ENCODE measurements at regions of chr12 and their contacts with region 1.

Region 1: GRCh38 chr12:132414634-132415326 is 75.2 kb upstream of the FBRSL1 start:
- DNase-seq: peak; percentile 80 to 92 (median 88)
- ATAC-seq: peak; percentile 98
- H3K4me3 ChIP-seq: no peak overlapping the region
- H3K27ac ChIP-seq: no peak overlapping the region
- H3K4me1 ChIP-seq: peaks cover 0 to 54% of the 10 kb centered on the region in 2 experiments; a peak in 2 of 5 replicates
- H3K27me3 ChIP-seq: peaks cover 5 to 42% of the 10 kb centered on the region in 2 experiments; a peak in 3 of 5 replicates
- CTCF ChIP-seq: peak; percentile 87 to 95 (median 93)
- EP300 ChIP-seq: no peak
- POLR2A ChIP-seq: no peak
- RAD21 ChIP-seq: peak; percentile 92 to 93

Region 2: GRCh38 chr12:132153501-132154340 is 261.1 kb before region 1 on chr12:
- CTCF ChIA-PET with region 1: no interaction called
- POLR2A ChIA-PET with region 1: interaction called, 5 read pairs
- in situ Hi-C with region 1: no loop called
- intact Hi-C with region 1: loop called (anchors 10 kb)
- DNase-seq: peak; percentile 58 to 71 (median 64)
- ATAC-seq: peak; percentile 99
- H3K4me3 ChIP-seq: no peak overlapping the region
- H3K27ac ChIP-seq: no peak overlapping the region
- H3K4me1 ChIP-seq: peaks cover 0 to 27% of the 10 kb centered on the region in 2 experiments; a peak in 2 of 5 replicates
- H3K27me3 ChIP-seq: no peaks in the 10 kb centered on the region; a peak in 1 of 5 replicates
- CTCF ChIP-seq: peak; percentile 82 to 90 (median 89)
- EP300 ChIP-seq: no peak
- POLR2A ChIP-seq: no peak; the same call in 1 of the 2 replicates
- RAD21 ChIP-seq: peak; percentile 64 to 84

Region 3: DNA sequence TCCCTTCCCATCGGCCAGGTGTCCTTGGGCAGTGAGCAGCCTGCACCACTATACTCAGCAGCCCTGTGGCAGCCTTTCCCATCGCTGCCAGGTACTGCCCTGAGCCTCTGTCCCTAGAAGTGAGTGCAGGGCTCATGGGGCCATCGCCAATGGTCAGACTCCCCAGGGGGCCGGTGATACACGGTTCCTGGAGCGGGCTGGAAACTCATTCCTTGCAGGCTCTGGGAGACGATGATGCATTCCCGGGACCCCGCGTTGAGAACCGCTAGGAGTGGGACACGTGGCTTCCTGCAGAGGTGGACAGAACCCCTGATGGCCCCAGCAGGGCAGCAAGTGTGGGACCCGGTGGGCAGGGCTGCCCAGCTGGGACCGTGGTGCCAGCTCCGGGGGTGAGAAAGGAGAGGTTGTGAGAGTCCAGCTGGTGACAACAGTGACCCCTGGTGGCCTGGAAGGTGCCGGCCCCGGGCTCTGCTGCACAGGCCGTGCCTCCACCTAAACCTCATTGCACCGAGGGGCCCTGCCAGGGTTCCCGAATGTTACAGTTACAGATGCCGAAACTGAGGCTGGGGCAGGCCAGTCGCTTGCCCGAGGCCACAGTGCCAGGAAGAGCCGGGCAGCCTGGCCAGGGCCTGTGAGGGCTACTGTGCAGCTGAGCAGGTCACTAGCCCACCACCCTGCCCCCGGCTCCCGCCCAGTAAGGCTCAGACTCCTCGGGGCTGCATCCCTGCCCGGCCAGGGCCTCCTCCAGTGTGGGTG is 109.0 kb after region 1 on chr12:
- CTCF ChIA-PET with region 1: interaction called, 20 read pairs
- POLR2A ChIA-PET with region 1: interaction called, 3 read pairs
- in situ Hi-C with region 1: no loop called
- intact Hi-C with region 1: loop called (anchors 2 kb)
- DNase-seq: peak; percentile 68 to 81 (median 78)
- ATAC-seq: peak; percentile 91
- H3K4me3 ChIP-seq: no peak overlapping the region
- H3K27ac ChIP-seq: no peak overlapping the region
- H3K4me1 ChIP-seq: peaks cover 0 to 67% of the 10 kb centered on the region in 2 experiments; a peak in 2 of 5 replicates
- H3K27me3 ChIP-seq: no peaks in the 10 kb centered on the region
- CTCF ChIP-seq: peak; percentile 79 to 86 (median 81)
- EP300 ChIP-seq: no peak
- POLR2A ChIP-seq: no peak
- RAD21 ChIP-seq: peak; percentile 52 to 75

Region 4: GRCh38 chr12:132560614-132561426 is 146.0 kb after region 1 on chr12:
- CTCF ChIA-PET with region 1: interaction called, 10 read pairs
- POLR2A ChIA-PET with region 1: interaction called, 3 read pairs
- in situ Hi-C with region 1: loop called (anchors 10 kb)
- intact Hi-C with region 1: loop called (anchors 2 kb)
- DNase-seq: peak; percentile 81 to 91 (median 86)
- ATAC-seq: peak; percentile 88
- H3K4me3 ChIP-seq: peak overlapping the region; percentile 83
- H3K27ac ChIP-seq: peak overlapping the region; percentile 80
- H3K4me1 ChIP-seq: peaks cover 6 to 60% of the 10 kb centered on the region in 2 experiments; a peak in 2 of 5 replicates
- H3K27me3 ChIP-seq: no peaks in the 10 kb centered on the region
- CTCF ChIP-seq: peak; percentile 71 to 86 (median 76)
- EP300 ChIP-seq: no peak
- POLR2A ChIP-seq: peak; percentile 41; the same call in 1 of the 2 replicates
- RAD21 ChIP-seq: peak; percentile 51 to 60

Region 5: GRCh38 chr12:132600048-132601032 is 185.6 kb after region 1 on chr12:
- CTCF ChIA-PET with region 1: no interaction called
- POLR2A ChIA-PET with region 1: no interaction called
- in situ Hi-C with region 1: loop called (anchors 5 kb)
- intact Hi-C with region 1: no loop called
- DNase-seq: peak; percentile 73 to 83 (median 79)
- ATAC-seq: peak; percentile 96
- H3K4me3 ChIP-seq: peak overlapping the region; percentile 36
- H3K27ac ChIP-seq: no peak overlapping the region
- H3K4me1 ChIP-seq: peaks cover 7 to 67% of the 10 kb centered on the region in 2 experiments; a peak in 4 of 5 replicates
- H3K27me3 ChIP-seq: peaks cover 29 to 51% of the 10 kb centered on the region in 2 experiments
- CTCF ChIP-seq: peak; percentile 85 to 98 (median 90)
- EP300 ChIP-seq: no peak
- POLR2A ChIP-seq: 0 out of 2 replicates have a peak, but pooled peaks have one; percentile 31
- RAD21 ChIP-seq: peak; percentile 40 to 83

Region 6: DNA sequence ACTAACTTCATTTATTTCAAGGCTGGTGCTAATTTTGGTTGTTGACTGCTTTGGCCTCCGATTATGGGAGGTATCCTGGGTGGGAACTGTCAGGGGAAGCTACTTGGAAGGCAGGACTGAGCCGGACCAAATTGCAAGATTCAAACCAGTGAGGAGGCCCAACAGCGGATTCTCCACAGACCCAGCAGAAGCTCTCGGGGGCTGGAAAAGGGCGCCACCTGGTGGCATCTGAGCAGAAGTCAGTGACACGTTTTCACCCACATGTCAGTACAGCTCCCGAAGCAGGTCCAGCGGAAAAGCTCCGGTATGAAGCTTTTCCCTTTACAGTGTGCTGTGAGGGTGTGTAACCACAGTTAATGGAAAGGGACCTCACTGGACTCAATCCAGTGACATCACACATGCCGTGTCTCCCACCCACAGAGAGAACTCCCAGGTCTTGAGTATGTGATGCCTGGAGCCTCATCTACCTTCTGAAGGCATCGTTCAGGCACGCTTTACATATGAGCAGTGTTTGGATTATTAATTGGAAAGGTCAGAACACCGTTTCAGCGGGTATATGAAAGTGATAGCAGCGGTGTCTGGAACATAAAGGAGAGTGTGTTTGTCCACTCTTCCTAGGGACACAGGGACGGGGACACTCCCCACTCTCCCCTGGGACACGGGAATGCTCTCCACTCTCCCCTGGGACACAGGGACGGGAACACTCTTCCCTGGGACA is 200.2 kb after region 1 on chr12:
- CTCF ChIA-PET with region 1: interaction called, 17 read pairs
- POLR2A ChIA-PET with region 1: no interaction called
- in situ Hi-C with region 1: no loop called
- intact Hi-C with region 1: loop called (anchors 1 kb)
- DNase-seq: peak; percentile 77 to 90 (median 78)
- ATAC-seq: peak; percentile 96
- H3K4me3 ChIP-seq: no peak overlapping the region
- H3K27ac ChIP-seq: no peak overlapping the region
- H3K4me1 ChIP-seq: peaks cover 0 to 16% of the 10 kb centered on the region in 2 experiments; a peak in 2 of 5 replicates
- H3K27me3 ChIP-seq: peaks cover 19 to 25% of the 10 kb centered on the region in 2 experiments; a peak in 4 of 5 replicates
- CTCF ChIP-seq: peak; percentile 92 to 93 (median 93)
- EP300 ChIP-seq: no peak
- POLR2A ChIP-seq: no peak
- RAD21 ChIP-seq: peak; percentile 69 to 94

Measured in K562 (cell line).